ENCODE measurements at regions of chr17 and their contacts with region 1.

Region 1: GRCh38 chr17:78862073-78863023 is 21.7 kb upstream of the USP36 start:
- DNase-seq: no peak
- H3K4me3 ChIP-seq: no peak overlapping the region
- H3K4me1 ChIP-seq: peaks cover 3% of the 10 kb centered on the region; the same call in 1 of the 2 replicates
- H3K27me3 ChIP-seq: no peaks in the 10 kb centered on the region

Region 2: GRCh38 chr17:78176548-78177025 is 685.8 kb before region 1 on chr17:
- in situ Hi-C with region 1: no loop called
- DNase-seq: peak; percentile 34 to 81
- H3K4me3 ChIP-seq: no peak overlapping the region
- H3K4me1 ChIP-seq: no peaks in the 10 kb centered on the region
- H3K27me3 ChIP-seq: no peaks in the 10 kb centered on the region

Region 3: GRCh38 chr17:78965491-78965948 is 103.2 kb after region 1 on chr17:
- in situ Hi-C with region 1: loop called (anchors 5 kb)
- DNase-seq: no peak
- H3K4me3 ChIP-seq: no peak overlapping the region
- H3K4me1 ChIP-seq: no peaks in the 10 kb centered on the region
- H3K27me3 ChIP-seq: no peaks in the 10 kb centered on the region

Measured in HAP-1 (cell line).